HCT116 (cell line): ENCODE measurements at regions of chr6 and their contacts with region 1.

Region 1: GRCh38 chr6:87393022-87393622 is 14.7 kb upstream of the CFAP206 start:
- DNase-seq: peak; percentile 62
- ATAC-seq: peak; percentile 90
- H3K4me3 ChIP-seq: no peak overlapping the region
- H3K27ac ChIP-seq: no peak overlapping the region
- H3K4me1 ChIP-seq: no peaks in the 10 kb centered on the region
- H3K27me3 ChIP-seq: no peaks in the 10 kb centered on the region
- CTCF ChIP-seq: peak; percentile 57 to 79 (median 60)
- POLR2A ChIP-seq: no peak
- RAD21 ChIP-seq: peak; percentile 88

Region 2: GRCh38 chr6:86959656-86960055 is 433.5 kb before region 1 on chr6:
- CTCF ChIA-PET with region 1: no interaction called
- POLR2A ChIA-PET with region 1: no interaction called
- RAD21 ChIA-PET with region 1: no interaction called
- intact Hi-C with region 1: no loop called
- DNase-seq: no peak
- ATAC-seq: no peak
- H3K4me3 ChIP-seq: no peak overlapping the region
- H3K27ac ChIP-seq: no peak overlapping the region
- H3K4me1 ChIP-seq: no peaks in the 10 kb centered on the region
- H3K27me3 ChIP-seq: peaks cover 10% of the 10 kb centered on the region
- CTCF ChIP-seq: no peak
- POLR2A ChIP-seq: no peak
- RAD21 ChIP-seq: no peak

Region 3: GRCh38 chr6:87139236-87139635 is 253.9 kb before region 1 on chr6:
- CTCF ChIA-PET with region 1: interaction called, 6 read pairs
- POLR2A ChIA-PET with region 1: no interaction called
- RAD21 ChIA-PET with region 1: no interaction called
- intact Hi-C with region 1: loop called (anchors 1 kb)
- DNase-seq: peak; percentile 54
- ATAC-seq: peak; percentile 88
- H3K4me3 ChIP-seq: no peak overlapping the region
- H3K27ac ChIP-seq: no peak overlapping the region
- H3K4me1 ChIP-seq: no peaks in the 10 kb centered on the region
- H3K27me3 ChIP-seq: 0 out of 2 replicates have a peak, but pooled peaks cover 4% of the 10 kb centered on the region
- CTCF ChIP-seq: peak; percentile 62 to 84 (median 69); a peak in 5 of 6 replicates
- POLR2A ChIP-seq: no peak
- RAD21 ChIP-seq: peak; percentile 87

Region 4: DNA sequence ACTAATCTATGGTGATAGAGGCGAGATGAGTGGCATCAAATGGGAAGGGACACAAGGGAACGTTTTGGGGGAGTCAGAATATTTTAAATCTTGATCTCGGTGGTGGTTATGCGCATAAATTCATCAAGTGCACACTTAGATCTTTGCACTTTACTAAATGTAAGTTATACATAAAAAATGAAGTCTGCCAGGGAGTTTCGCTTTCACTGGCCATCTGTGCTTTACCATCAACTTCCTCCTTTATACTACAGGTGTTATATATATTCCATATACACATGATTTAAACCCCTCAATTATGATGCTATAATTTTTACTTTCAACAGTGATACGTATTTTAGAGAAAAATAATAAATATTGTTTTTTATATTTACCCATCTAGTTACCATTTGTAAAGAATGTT is 406.5 kb after region 1 on chr6:
- CTCF ChIA-PET with region 1: no interaction called
- POLR2A ChIA-PET with region 1: no interaction called
- RAD21 ChIA-PET with region 1: no interaction called
- intact Hi-C with region 1: loop called (anchors 10 kb)
- DNase-seq: no peak
- ATAC-seq: no peak
- H3K4me3 ChIP-seq: no peak overlapping the region
- H3K27ac ChIP-seq: no peak overlapping the region
- H3K4me1 ChIP-seq: peaks cover 0 to 5% of the 10 kb centered on the region in 2 experiments; a peak in 1 of 4 replicates
- H3K27me3 ChIP-seq: no peaks in the 10 kb centered on the region
- CTCF ChIP-seq: no peak
- POLR2A ChIP-seq: no peak
- RAD21 ChIP-seq: no peak

Region 5: DNA sequence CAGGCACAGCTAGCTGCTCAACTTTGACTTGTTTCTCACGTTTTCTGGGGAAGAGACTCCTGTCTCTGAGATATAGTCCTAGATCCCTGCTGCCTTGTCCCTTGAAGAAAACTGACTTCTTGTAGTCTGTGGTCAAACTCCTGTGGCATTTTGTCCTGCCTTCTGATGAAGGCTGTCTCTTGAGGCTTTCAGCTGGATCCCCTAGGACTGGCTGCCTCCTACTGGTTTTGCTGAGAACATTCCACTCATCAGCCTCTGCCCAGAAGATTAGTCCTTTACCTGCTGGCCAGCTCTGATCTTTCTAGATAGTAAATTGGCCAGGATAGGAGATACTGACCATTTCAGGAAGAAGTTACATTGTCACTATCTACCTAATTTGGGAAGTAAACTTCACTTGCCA is 844.9 kb after region 1 on chr6:
- CTCF ChIA-PET with region 1: interaction called, 5 read pairs
- POLR2A ChIA-PET with region 1: no interaction called
- RAD21 ChIA-PET with region 1: no interaction called
- intact Hi-C with region 1: loop called (anchors 10 kb)
- DNase-seq: peak; percentile 13
- ATAC-seq: peak; percentile 67
- H3K4me3 ChIP-seq: no peak overlapping the region
- H3K27ac ChIP-seq: no peak overlapping the region
- H3K4me1 ChIP-seq: no peaks in the 10 kb centered on the region
- H3K27me3 ChIP-seq: no peaks in the 10 kb centered on the region
- CTCF ChIP-seq: peak; percentile 28 to 44 (median 40); a peak in 5 of 6 replicates
- POLR2A ChIP-seq: no peak
- RAD21 ChIP-seq: peak; percentile 62